Right lobe of liver (tissue), 6 donors: ENCODE measurements at regions of chr2 and their contacts with region 1.

Region 1: GRCh38 chr2:38274286-38275276 is 102.5 kb downstream of the ATL2 start:
- DNase-seq: no peak
- ATAC-seq: peak; percentile 95 to 100 (median 98)
- H3K4me3 ChIP-seq: no peak overlapping the region
- H3K27ac ChIP-seq: no peak overlapping the region
- H3K4me1 ChIP-seq: no peaks in the 10 kb centered on the region
- H3K27me3 ChIP-seq: no peaks in the 10 kb centered on the region
- CTCF ChIP-seq: peak; percentile 62 to 91 (median 64)
- POLR2A ChIP-seq: no peak

Region 2: DNA sequence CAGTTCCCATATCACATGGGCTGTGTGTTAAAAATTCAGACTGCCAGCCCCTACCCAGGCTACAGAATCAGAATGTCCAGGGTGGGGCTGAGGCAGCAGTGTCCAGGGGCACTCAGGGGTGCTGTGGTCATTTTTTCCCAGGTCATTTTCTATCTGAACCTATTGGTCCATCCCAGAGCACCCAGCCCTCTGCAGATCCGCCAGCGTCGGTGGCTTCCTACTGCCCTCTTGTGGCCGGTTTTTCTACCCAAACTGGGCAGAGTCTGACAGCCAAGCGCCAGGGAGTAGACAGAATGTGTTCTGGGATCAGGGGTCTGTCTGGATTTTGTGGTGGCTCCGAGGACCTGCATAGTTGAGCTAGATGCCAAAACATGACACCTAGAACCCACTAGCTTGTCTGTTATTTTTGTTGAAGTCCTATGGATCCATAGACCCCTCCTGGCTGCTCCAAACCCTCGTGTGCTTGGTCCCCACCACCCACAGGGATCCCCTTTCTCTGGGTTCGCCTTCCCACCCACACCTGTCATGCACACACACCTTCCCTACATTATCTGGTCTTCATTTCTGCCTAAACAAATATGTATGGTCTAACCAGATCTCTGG is 383.6 kb before region 1 on chr2:
- intact Hi-C with region 1: loop called (anchors 10 kb)
- DNase-seq: peak; percentile 75 to 80 (median 76)
- ATAC-seq: peak; percentile 94 to 98 (median 96)
- H3K4me3 ChIP-seq: no peak overlapping the region
- H3K27ac ChIP-seq: no peak overlapping the region
- H3K4me1 ChIP-seq: no peaks in the 10 kb centered on the region
- H3K27me3 ChIP-seq: no peaks in the 10 kb centered on the region
- CTCF ChIP-seq: peak; percentile 53 to 81 (median 79)
- POLR2A ChIP-seq: no peak

Region 3: GRCh38 chr2:37982147-37982582 is 292.4 kb before region 1 on chr2:
- intact Hi-C with region 1: loop called in 1 of 2 experiments (anchors 10 kb)
- DNase-seq: peak; percentile 52 to 66 (median 62)
- ATAC-seq: peak; percentile 66 to 82 (median 81)
- H3K4me3 ChIP-seq: no peak overlapping the region
- H3K27ac ChIP-seq: no peak overlapping the region
- H3K4me1 ChIP-seq: no peaks in the 10 kb centered on the region
- H3K27me3 ChIP-seq: no peaks in the 10 kb centered on the region
- CTCF ChIP-seq: peak; percentile 79 to 86 (median 80)
- POLR2A ChIP-seq: no peak

Region 4: GRCh38 chr2:38076606-38077430 is 197.8 kb before region 1 on chr2:
- intact Hi-C with region 1: loop called in 1 of 2 experiments (anchors 10 kb)
- DNase-seq: peak; percentile 84 to 92 (median 90)
- ATAC-seq: peak; percentile 66 to 82 (median 74)
- H3K4me3 ChIP-seq: peak overlapping the region; percentile 62 to 69 (median 68)
- H3K27ac ChIP-seq: peak overlapping the region; percentile 88 to 98 (median 89)
- H3K4me1 ChIP-seq: peaks cover 0 to 32% (median 3%) of the 10 kb centered on the region in 4 donors
- H3K27me3 ChIP-seq: no peaks in the 10 kb centered on the region
- CTCF ChIP-seq: peak; percentile 42 to 53 (median 46)
- POLR2A ChIP-seq: peak; percentile 73

Region 5: DNA sequence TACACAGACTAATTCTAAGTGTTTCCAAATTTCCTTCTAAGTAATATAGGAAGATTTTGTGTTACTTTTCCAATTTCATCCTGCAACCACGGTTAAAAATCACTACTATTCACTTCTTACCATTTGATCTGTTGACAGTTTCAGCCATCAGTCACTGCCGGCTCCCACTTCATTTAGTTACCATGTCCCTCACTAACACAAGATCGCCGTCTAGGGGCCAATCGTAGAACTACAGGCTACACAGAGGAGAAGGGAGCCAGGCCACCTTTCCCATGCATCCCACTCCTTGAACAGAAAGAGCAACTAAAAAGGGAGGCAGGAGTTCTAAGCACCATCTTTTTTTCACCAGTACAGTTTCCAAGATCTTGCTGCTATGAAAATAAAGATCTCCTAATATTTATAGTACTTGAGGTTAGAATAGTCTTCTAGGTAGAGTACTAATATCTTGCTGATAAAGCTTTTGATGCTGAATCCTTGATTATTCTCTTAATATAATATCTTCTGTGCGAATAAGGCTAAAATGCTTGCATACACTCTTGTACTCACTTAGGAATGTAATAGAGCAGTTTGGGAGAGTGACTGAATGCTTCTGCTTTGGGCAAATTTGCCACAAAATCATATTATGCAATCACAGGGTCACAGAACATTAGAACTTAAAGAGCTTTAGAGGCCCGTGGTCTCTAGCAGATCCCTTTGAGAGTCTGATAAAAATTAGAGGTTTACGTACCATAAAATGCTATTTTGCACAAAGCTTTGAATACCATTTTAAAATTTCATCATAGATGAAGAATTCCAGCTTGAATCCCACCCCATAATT is 159.2 kb before region 1 on chr2:
- intact Hi-C with region 1: no loop called
- DNase-seq: peak; percentile 77 to 88 (median 80)
- ATAC-seq: peak; percentile 92 to 96 (median 94)
- H3K4me3 ChIP-seq: no peak overlapping the region
- H3K27ac ChIP-seq: no peak overlapping the region
- H3K4me1 ChIP-seq: peaks cover 0 to 33% (median 12%) of the 10 kb centered on the region in 4 donors
- H3K27me3 ChIP-seq: no peaks in the 10 kb centered on the region
- CTCF ChIP-seq: peak; percentile 94 to 97 (median 94)
- POLR2A ChIP-seq: no peak

Region 6: DNA sequence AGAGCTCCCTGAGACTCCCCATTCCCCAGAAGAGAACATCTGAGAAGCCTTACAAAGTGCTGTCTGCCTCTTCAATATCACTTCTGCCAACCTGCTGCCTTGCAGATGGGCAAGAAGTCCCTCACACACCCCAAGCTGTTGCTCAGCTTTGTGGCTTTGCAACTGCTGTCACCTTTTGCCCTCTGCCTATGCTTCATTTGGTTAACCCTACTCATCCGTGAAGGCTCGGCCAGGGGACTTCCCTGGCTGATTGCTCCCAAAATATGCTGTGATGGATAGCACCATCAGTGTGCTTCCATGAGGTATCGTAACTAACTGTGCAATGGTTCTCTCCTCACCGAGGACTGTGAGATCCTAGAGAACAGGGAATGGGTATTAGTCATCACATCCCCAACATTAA is 109.7 kb before region 1 on chr2:
- intact Hi-C with region 1: loop called in 1 of 2 experiments (anchors 10 kb)
- DNase-seq: no peak
- ATAC-seq: no peak
- H3K4me3 ChIP-seq: no peak overlapping the region
- H3K27ac ChIP-seq: no peak overlapping the region
- H3K4me1 ChIP-seq: peaks cover 0 to 2% (median under 1%) of the 10 kb centered on the region in 4 donors
- H3K27me3 ChIP-seq: no peaks in the 10 kb centered on the region
- CTCF ChIP-seq: no peak
- POLR2A ChIP-seq: no peak